HEK293 (cell line): ENCODE measurements at regions of chr13 and their contacts with region 1.

Region 1: DNA sequence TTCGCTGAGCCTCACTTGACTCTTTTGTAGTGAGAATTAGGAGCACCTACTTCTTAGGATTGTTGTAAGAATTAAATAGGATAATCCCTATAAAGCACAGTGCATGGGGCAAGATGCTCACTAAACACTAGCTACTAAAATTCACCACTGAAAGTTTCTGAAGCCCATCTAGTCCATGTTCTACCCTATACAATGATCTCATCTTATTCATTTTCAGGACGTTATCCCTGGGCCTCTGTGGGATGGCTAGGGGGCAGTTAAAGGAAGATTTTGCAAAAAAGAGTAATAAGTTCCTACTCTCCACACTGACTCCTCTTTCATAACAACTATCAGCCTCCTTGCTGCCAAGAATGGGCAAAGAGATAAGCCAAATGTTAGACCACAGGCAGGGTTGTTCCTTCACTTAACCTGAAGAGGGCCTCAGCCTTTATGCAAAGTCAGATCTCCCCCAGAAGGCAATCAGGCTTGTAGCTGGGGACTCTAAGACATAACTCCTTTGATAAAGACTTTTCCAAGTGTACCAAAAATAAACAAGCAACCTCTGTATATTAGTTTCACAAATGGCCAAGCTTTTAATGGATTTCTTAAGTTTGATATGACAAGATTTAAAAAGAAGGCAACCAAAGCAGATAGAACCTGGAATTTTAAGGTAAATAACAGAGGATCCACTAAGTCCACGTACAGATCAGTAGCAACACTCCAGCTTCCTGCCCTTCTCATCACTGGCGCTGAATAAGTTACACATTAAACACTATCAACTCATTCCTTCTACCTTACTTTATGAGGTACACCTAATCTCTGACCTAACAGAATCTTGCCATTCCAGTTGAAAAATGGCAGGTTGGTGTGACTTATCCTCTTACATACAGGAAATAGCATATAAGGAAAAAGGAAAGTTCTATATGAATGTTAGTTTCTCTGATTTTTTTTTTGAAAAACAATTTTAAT is 44.4 kb downstream of the ELF1 start:
- H3K4me3 ChIP-seq: no peak overlapping the region
- H3K27ac ChIP-seq: no peak overlapping the region
- H3K4me1 ChIP-seq: peaks cover 23% of the 10 kb centered on the region
- CTCF ChIP-seq: no peak

Region 2: DNA sequence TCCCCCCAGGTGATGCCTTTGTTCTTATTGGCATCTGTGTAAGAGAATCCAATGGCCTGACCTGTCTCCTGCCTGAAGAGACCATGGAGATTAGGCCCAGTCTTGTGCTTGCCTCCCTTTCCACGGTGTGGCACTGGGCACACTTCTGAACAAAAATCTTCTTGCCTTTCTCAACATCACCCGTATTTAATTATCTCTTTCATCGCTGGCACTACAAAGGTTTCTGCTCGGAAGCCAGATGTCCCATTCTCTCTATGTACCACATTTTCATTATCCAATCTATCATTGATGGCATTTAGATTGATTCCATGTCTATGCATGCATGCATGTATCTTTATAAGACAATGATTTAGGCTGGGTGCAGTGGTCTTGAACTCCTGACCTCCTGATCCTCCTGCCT is 111.0 kb before region 1 on chr13:
- CTCF ChIA-PET with region 1: no interaction called
- POLR2A ChIA-PET with region 1: no interaction called
- H3K4me3 ChIP-seq: no peak overlapping the region
- H3K27ac ChIP-seq: no peak overlapping the region
- H3K4me1 ChIP-seq: no peaks in the 10 kb centered on the region
- CTCF ChIP-seq: no peak

Region 3: GRCh38 chr13:41054212-41054877 is 79.6 kb after region 1 on chr13:
- CTCF ChIA-PET with region 1: interaction called, 16 read pairs
- POLR2A ChIA-PET with region 1: no interaction called
- H3K4me3 ChIP-seq: no peak overlapping the region
- H3K27ac ChIP-seq: no peak overlapping the region
- H3K4me1 ChIP-seq: peaks cover 3% of the 10 kb centered on the region; the same call in 1 of the 2 replicates
- CTCF ChIP-seq: 0 out of 2 replicates have a peak, but pooled peaks have one; percentile 12